MCF 10A (cell line): ENCODE measurements at regions of chr5 and their contacts with region 1.

Region 1: GRCh38 chr5:68419637-68420452 is 204.3 kb downstream of the PIK3R1 start:
- DNase-seq: peak; percentile 24
- H3K4me3 Mint-ChIP-seq: no peak overlapping the region
- H3K27ac Mint-ChIP-seq: no peak overlapping the region
- H3K4me1 Mint-ChIP-seq: peaks cover 23% of the 10 kb centered on the region
- H3K27me3 Mint-ChIP-seq: no peaks in the 10 kb centered on the region
- CTCF ChIP-seq: no peak

Region 2: GRCh38 chr5:68433923-68434879 is 14.4 kb after region 1 on chr5:
- CTCF ChIA-PET with region 1: interaction called, 4 read pairs
- POLR2A ChIA-PET with region 1: interaction called, 11 read pairs
- intact Hi-C with region 1: no loop called
- DNase-seq: peak; percentile 99
- H3K4me3 Mint-ChIP-seq: peak overlapping the region; percentile 46
- H3K27ac Mint-ChIP-seq: peak overlapping the region; percentile 93
- H3K4me1 Mint-ChIP-seq: peaks cover 30% of the 10 kb centered on the region
- H3K27me3 Mint-ChIP-seq: no peaks in the 10 kb centered on the region
- CTCF ChIP-seq: no peak